HCT116 (cell line): ENCODE measurements at regions of chr1 and their contacts with region 1.

Region 1: GRCh38 chr1:48552420-48552819 is 80.4 kb upstream of the SPATA6 start:
- DNase-seq: peak; percentile 10
- ATAC-seq: peak; percentile 89
- H3K4me3 ChIP-seq: no peak overlapping the region
- H3K27ac ChIP-seq: no peak overlapping the region
- H3K4me1 ChIP-seq: no peaks in the 10 kb centered on the region
- H3K27me3 ChIP-seq: peaks cover 55% of the 10 kb centered on the region
- CTCF ChIP-seq: peak; percentile 35 to 52 (median 52); a peak in 5 of 6 replicates
- POLR2A ChIP-seq: no peak
- RAD21 ChIP-seq: peak; percentile 51

Region 2: GRCh38 chr1:48697066-48697707 is 144.8 kb after region 1 on chr1:
- CTCF ChIA-PET with region 1: no interaction called
- POLR2A ChIA-PET with region 1: no interaction called
- RAD21 ChIA-PET with region 1: no interaction called
- intact Hi-C with region 1: loop called (anchors 5 kb)
- DNase-seq: peak; percentile 18
- ATAC-seq: peak; percentile 83
- H3K4me3 ChIP-seq: no peak overlapping the region
- H3K27ac ChIP-seq: no peak overlapping the region
- H3K4me1 ChIP-seq: peaks cover 0 to 7% of the 10 kb centered on the region in 2 experiments; a peak in 2 of 4 replicates
- H3K27me3 ChIP-seq: peaks cover 42% of the 10 kb centered on the region
- CTCF ChIP-seq: peak; percentile 51 to 93 (median 92)
- POLR2A ChIP-seq: no peak
- RAD21 ChIP-seq: peak; percentile 55

Region 3: GRCh38 chr1:48859431-48859830 is 307.0 kb after region 1 on chr1:
- CTCF ChIA-PET with region 1: no interaction called
- POLR2A ChIA-PET with region 1: no interaction called
- RAD21 ChIA-PET with region 1: no interaction called
- intact Hi-C with region 1: no loop called
- DNase-seq: no peak
- ATAC-seq: no peak
- H3K4me3 ChIP-seq: no peak overlapping the region
- H3K27ac ChIP-seq: no peak overlapping the region
- H3K4me1 ChIP-seq: no peaks in the 10 kb centered on the region
- H3K27me3 ChIP-seq: no peaks in the 10 kb centered on the region
- CTCF ChIP-seq: no peak
- POLR2A ChIP-seq: no peak
- RAD21 ChIP-seq: no peak

Region 4: GRCh38 chr1:48898894-48899293 is 346.5 kb after region 1 on chr1:
- CTCF ChIA-PET with region 1: no interaction called
- POLR2A ChIA-PET with region 1: no interaction called
- RAD21 ChIA-PET with region 1: no interaction called
- intact Hi-C with region 1: no loop called
- DNase-seq: no peak
- ATAC-seq: no peak
- H3K4me3 ChIP-seq: no peak overlapping the region
- H3K27ac ChIP-seq: no peak overlapping the region
- H3K4me1 ChIP-seq: no peaks in the 10 kb centered on the region
- H3K27me3 ChIP-seq: no peaks in the 10 kb centered on the region
- CTCF ChIP-seq: no peak
- POLR2A ChIP-seq: no peak
- RAD21 ChIP-seq: no peak